ENCODE measurements at regions of chr4 and their contacts with region 1.

Region 1: DNA sequence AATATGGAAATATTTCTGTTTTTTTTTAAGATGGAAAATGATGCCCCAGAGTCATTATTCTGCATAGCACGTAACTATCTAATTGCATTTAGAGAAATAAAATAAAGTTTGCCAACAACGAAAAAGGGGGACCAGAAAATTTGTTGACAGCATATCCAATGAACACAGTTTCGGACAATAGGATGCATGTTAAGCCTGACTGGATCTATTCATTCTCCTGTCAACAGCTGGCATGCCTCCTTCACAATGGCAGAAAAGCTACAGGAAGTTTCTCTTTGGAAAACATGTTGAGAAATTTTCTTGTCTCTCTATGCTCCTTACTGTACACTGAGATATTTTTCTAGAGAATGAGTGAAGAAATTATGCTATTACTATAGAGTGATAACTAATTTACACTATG is 262.5 kb downstream of the GRID2 start:
- DNase-seq: no peak
- H3K4me3 ChIP-seq: peak overlapping the region in 3 of 59 donors; percentile 5 to 21 (median 20)
- H3K27ac ChIP-seq: peak overlapping the region in 25 of 59 donors; percentile 1 to 84 (median 50)
- H3K27me3 ChIP-seq: no peaks in the 10 kb centered on the region
- CTCF ChIP-seq: no peak

Region 2: GRCh38 chr4:92175250-92175649 is 391.0 kb before region 1 on chr4:
- intact Hi-C with region 1: no loop called
- DNase-seq: no peak
- H3K4me3 ChIP-seq: no peak overlapping the region
- H3K27ac ChIP-seq: no peak overlapping the region
- H3K27me3 ChIP-seq: no peaks in the 10 kb centered on the region
- CTCF ChIP-seq: no peak

Region 3: GRCh38 chr4:92636038-92636806 is 70.0 kb after region 1 on chr4:
- intact Hi-C with region 1: loop called in 1 of 2 experiments (anchors 10 kb)
- DNase-seq: peak in 4 of 10 donors; percentile 5 to 43 (median 38)
- H3K4me3 ChIP-seq: peak overlapping the region in 3 of 59 donors; percentile 2 to 17 (median 3)
- H3K27ac ChIP-seq: peak overlapping the region in 27 of 59 donors; percentile 5 to 87 (median 61)
- H3K27me3 ChIP-seq: no peaks in the 10 kb centered on the region
- CTCF ChIP-seq: no peak

Measured in dorsolateral prefrontal cortex (tissue), 120 donors.